Tibial artery (tissue), 4 donors: ENCODE measurements at regions of chr2 and their contacts with region 1.

Region 1: GRCh38 chr2:56009758-56010458 is 86.3 kb upstream of the EFEMP1 start:
- DNase-seq: no peak
- H3K4me3 ChIP-seq: no peak overlapping the region
- H3K27ac ChIP-seq: no peak overlapping the region
- H3K4me1 ChIP-seq: peaks cover 0 to 12% (median 5%) of the 10 kb centered on the region in 4 donors
- H3K27me3 ChIP-seq: no peaks in the 10 kb centered on the region
- CTCF ChIP-seq: peak; percentile 57 to 68

Region 2: GRCh38 chr2:55779459-55780421 is 230.2 kb before region 1 on chr2:
- intact Hi-C with region 1: loop called (anchors 5 kb)
- DNase-seq: no peak
- H3K4me3 ChIP-seq: no peak overlapping the region
- H3K27ac ChIP-seq: no peak overlapping the region
- H3K4me1 ChIP-seq: no peaks in the 10 kb centered on the region
- H3K27me3 ChIP-seq: no peaks in the 10 kb centered on the region
- CTCF ChIP-seq: no peak

Region 3: GRCh38 chr2:55885129-55885943 is 124.6 kb before region 1 on chr2:
- intact Hi-C with region 1: no loop called
- DNase-seq: no peak
- H3K4me3 ChIP-seq: no peak overlapping the region
- H3K27ac ChIP-seq: peak overlapping the region; percentile 77 to 82
- H3K4me1 ChIP-seq: peaks cover 0 to 90% (median 49%) of the 10 kb centered on the region in 4 donors
- H3K27me3 ChIP-seq: no peaks in the 10 kb centered on the region
- CTCF ChIP-seq: no peak

Region 4: DNA sequence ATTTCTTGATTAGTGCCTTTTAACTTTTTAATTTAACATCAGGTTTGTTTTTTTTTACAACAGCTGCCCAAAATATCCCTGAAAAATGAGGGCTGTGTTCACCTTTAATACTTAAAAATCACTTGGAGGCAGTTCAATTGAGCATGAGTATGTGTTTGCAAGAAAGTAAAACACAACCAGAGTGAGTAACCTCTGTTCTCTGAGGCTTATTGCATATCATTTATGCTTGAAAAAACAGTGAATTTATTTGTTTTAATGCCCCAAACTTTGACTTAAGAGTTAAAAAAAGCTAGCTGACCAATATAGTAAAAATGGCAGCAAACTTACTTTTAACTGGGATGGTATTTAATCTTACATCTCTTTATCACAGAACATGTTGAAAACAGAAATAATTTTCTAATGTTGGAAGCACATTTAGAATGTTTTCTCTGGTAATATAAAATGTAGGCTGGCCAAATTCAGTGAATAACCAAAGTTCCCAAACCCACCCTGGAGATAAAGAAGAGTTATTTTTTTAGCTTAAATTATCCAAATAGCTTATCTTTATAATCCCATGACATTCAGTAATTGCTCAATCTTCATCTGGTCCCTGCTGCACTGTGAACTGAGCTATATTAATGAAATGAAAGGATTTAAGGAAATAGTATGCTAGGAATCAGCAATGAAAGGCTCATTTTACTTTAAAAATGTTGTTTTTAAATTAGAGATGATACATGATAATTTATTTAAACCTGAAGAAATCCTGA is 61.6 kb before region 1 on chr2:
- intact Hi-C with region 1: no loop called
- DNase-seq: no peak
- H3K4me3 ChIP-seq: no peak overlapping the region
- H3K27ac ChIP-seq: no peak overlapping the region
- H3K4me1 ChIP-seq: peaks cover 0 to 15% (median 0%) of the 10 kb centered on the region in 4 donors
- H3K27me3 ChIP-seq: no peaks in the 10 kb centered on the region
- CTCF ChIP-seq: no peak